Activated CD4-positive, alpha-beta T cell treated with anti-CD3 and anti-CD28 coated beads for 36 hours (primary cell): ENCODE measurements at regions of chr10 and their contacts with region 1.

Region 1: DNA sequence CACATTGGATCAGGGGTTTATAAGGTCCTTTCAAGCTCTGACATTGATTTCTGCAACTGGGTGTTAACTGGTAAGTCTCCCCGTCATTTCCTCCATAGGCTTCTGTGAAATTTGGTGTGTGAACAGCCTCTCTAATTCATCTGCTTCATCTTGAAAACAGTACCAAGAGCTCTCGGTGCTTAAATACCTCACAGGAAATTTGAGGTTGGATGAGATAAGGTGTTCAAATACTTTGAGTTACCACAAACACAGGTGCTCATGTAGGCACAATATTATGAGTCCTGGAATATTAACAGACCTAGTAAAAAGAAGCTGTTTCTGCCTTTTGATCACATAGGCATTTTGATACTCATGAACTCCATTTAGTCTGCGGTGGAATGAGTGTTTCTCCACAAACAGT is 85.2 kb downstream of the RTKN2 start:
- DNase-seq: peak; percentile 53
- ATAC-seq: peak; percentile 54
- H3K4me3 Mint-ChIP-seq: peak overlapping the region; percentile 44
- H3K27ac Mint-ChIP-seq: peak overlapping the region; percentile 99
- H3K4me1 Mint-ChIP-seq: peaks cover 89% of the 10 kb centered on the region
- H3K27me3 Mint-ChIP-seq: no peaks in the 10 kb centered on the region

Region 2: GRCh38 chr10:60282771-60283353 is 1900.6 kb before region 1 on chr10:
- CTCF ChIA-PET with region 1: no interaction called
- POLR2A ChIA-PET with region 1: no interaction called
- intact Hi-C with region 1: no loop called
- DNase-seq: no peak
- ATAC-seq: no peak
- H3K4me3 Mint-ChIP-seq: no peak overlapping the region
- H3K27ac Mint-ChIP-seq: no peak overlapping the region
- H3K4me1 Mint-ChIP-seq: peaks cover 7% of the 10 kb centered on the region
- H3K27me3 Mint-ChIP-seq: no peaks in the 10 kb centered on the region

Region 3: DNA sequence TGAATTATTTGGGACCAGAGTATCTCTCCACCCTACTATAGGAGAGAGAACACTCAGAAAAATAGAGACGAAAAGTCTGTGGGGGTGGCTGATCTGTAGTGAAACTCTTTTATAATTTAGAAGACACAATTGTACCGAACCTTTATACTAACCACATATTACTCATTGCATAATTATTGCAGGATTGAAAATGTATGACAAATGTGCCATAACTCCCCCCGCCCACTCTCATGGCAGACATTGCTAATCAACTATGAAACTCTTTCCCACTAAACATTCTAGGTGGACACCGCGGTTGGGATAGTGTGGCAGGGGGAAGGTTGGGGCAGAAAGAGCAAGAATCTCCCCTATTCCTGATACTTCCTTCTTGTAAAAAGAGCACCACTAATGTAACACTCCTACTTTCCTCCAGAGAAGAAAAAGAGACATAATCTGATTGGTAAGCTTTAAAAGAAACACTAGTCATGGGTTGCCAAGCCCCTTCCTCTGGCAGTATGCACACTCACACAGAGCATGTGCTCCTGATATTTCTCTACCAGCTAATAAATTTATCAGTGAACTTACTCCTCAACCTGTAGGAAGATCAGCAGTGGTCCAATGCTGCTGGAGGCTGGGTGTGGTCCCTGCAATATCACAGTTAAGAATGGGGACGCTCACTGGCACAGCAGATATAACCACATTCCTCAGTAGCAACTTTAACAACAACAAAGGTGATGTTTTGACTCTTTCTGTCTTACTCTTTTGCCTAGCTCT is 300.6 kb before region 1 on chr10:
- CTCF ChIA-PET with region 1: no interaction called
- POLR2A ChIA-PET with region 1: no interaction called
- intact Hi-C with region 1: loop called (anchors 1 to 5 kb)
- DNase-seq: peak; percentile 86
- ATAC-seq: peak; percentile 96
- H3K4me3 Mint-ChIP-seq: no peak overlapping the region
- H3K27ac Mint-ChIP-seq: peak overlapping the region; percentile 87
- H3K4me1 Mint-ChIP-seq: peaks cover 31% of the 10 kb centered on the region
- H3K27me3 Mint-ChIP-seq: no peaks in the 10 kb centered on the region

Region 4: DNA sequence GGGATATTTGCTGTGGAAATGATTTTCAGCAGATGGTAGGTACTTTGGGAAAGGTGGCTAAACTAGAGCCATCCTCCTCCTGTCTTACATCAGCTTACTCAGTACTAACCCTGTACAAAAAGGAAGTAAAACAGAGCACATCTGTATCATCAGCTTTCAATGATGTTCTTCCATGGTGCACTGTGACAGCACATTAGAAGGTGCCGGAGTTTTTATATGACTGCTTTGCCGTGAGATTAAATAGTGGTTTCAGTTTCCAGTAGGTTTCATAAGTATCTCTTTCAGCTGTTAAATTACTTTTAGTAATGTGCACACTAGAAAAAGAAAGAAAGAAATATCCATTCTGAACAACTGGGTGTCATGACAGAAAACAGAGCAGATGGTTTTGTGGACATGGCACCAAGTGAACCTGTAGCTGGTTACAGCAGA is 195.5 kb before region 1 on chr10:
- CTCF ChIA-PET with region 1: interaction called, 7 read pairs
- POLR2A ChIA-PET with region 1: interaction called, 13 read pairs
- intact Hi-C with region 1: loop called (anchors 1 to 2 kb)
- DNase-seq: peak; percentile 40
- ATAC-seq: peak; percentile 89
- H3K4me3 Mint-ChIP-seq: peak overlapping the region; percentile 29
- H3K27ac Mint-ChIP-seq: peak overlapping the region; percentile 99
- H3K4me1 Mint-ChIP-seq: peaks cover 92% of the 10 kb centered on the region
- H3K27me3 Mint-ChIP-seq: no peaks in the 10 kb centered on the region

Region 5: DNA sequence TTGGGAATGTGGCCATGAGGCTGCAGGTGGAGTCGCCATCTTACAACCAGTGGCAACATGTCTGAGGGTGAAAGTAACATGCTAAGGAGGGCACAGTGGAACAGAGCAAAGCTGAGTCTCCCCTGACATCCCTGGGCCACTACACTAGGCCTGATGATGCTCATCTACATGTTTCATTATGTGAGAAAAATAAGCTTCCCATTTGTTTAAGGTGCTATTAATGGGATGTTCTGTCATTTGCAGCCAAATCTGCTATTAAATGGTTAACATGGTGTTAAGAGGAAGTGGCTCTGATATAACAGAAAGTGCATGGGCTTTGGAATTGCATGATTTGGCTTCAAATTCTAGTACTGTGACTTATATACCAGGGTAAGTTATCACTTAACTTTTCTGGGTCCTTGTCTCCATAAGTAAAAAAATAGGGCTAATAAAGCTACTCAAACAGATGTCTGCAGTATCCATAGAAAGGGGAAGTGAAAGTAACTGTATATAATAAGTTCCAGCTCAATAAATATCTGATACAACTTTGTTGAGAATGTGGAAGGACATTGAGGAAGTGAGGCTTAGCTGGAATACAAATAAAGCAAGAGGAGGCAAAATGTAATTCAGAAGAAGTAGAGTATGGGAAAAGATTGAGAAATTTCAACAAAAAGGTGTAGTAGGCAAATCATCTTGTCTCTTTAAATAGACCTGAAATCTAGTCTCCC is 73.7 kb before region 1 on chr10:
- CTCF ChIA-PET with region 1: no interaction called
- POLR2A ChIA-PET with region 1: no interaction called
- intact Hi-C with region 1: loop called in 1 of 2 experiments (anchors 5 kb)
- DNase-seq: no peak
- ATAC-seq: no peak
- H3K4me3 Mint-ChIP-seq: no peak overlapping the region
- H3K27ac Mint-ChIP-seq: no peak overlapping the region
- H3K4me1 Mint-ChIP-seq: peaks cover 52% of the 10 kb centered on the region
- H3K27me3 Mint-ChIP-seq: no peaks in the 10 kb centered on the region

Region 6: DNA sequence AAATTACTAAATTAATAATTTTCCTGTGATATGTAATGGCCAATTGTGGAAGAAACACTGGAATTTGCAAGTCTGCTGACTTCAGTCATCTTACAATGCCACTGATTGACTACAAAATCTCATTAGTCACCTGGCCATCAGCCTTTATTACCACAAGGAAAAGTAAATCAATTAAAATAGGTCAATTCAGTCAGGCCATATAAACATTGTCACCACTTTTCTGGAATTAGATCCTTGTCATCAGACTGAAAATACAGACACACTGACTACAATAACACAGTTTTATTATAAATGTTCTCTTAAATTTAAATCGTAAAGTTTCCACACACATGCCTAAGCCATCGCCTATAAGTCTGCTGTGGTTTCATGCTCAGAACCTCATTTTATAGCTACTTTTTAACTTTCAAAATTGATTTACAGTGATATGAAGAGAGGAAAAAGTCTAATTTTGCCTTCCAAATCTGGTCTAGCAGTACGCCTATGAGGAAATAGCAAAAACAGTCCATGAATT is 31.0 kb after region 1 on chr10:
- CTCF ChIA-PET with region 1: no interaction called
- POLR2A ChIA-PET with region 1: no interaction called
- intact Hi-C with region 1: no loop called
- DNase-seq: no peak
- ATAC-seq: no peak
- H3K4me3 Mint-ChIP-seq: no peak overlapping the region
- H3K27ac Mint-ChIP-seq: no peak overlapping the region
- H3K4me1 Mint-ChIP-seq: peaks cover 6% of the 10 kb centered on the region
- H3K27me3 Mint-ChIP-seq: no peaks in the 10 kb centered on the region

Region 7: GRCh38 chr10:62244780-62245467 is 61.5 kb after region 1 on chr10:
- CTCF ChIA-PET with region 1: interaction called, 10 read pairs
- POLR2A ChIA-PET with region 1: interaction called, 4 read pairs
- intact Hi-C with region 1: loop called (anchors 1 kb)
- DNase-seq: peak; percentile 65
- ATAC-seq: peak; percentile 84
- H3K4me3 Mint-ChIP-seq: peak overlapping the region; percentile 36
- H3K27ac Mint-ChIP-seq: peak overlapping the region; percentile 87
- H3K4me1 Mint-ChIP-seq: peaks cover 35% of the 10 kb centered on the region
- H3K27me3 Mint-ChIP-seq: no peaks in the 10 kb centered on the region

Region 8: GRCh38 chr10:62614389-62615157 is 431.1 kb after region 1 on chr10:
- CTCF ChIA-PET with region 1: no interaction called
- POLR2A ChIA-PET with region 1: no interaction called
- intact Hi-C with region 1: no loop called
- DNase-seq: peak; percentile 58
- ATAC-seq: peak; percentile 85
- H3K4me3 Mint-ChIP-seq: no peak overlapping the region
- H3K27ac Mint-ChIP-seq: peak overlapping the region; percentile 6
- H3K4me1 Mint-ChIP-seq: peaks cover 29% of the 10 kb centered on the region
- H3K27me3 Mint-ChIP-seq: peaks cover 13% of the 10 kb centered on the region

Region 9: DNA sequence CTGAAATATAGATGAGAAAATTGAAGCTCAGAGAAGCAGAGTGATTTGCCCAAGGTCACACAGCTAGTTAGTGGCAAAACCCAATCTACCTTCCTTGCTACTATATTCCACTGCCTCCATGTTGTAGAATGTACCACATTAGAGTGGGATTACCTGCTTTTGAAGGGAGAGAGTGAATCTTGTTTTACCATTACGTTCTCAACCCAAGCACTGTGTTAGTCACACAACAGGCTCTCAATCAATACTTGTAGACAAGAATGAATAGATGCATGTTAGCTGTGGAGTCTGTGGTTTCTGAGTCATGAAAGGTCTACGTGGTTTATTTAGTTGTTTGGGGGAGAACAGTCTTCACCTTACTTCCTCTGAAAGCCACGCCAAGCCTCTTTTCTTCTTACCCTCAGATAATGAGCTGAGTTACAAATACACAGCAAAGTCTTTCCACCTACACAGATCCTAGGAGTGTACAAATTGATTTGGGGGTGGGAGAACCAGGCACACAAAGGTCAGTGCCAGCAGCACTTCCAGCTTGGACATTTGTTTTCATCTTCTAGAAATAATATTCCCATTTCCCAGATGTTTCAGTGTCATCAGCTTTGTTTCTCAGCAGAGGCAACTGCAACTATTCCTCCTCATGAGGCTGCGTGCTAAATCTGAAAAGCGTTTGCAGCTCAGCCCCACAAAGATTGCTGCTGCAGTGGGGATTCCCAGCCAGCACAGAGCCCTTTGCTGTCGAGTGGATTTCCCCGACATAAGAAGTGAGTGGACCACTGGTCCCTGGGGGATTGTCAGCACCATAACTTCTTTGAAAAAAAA is 549.6 kb after region 1 on chr10:
- CTCF ChIA-PET with region 1: no interaction called
- POLR2A ChIA-PET with region 1: no interaction called
- intact Hi-C with region 1: loop called in 1 of 2 experiments (anchors 2 kb)
- DNase-seq: peak; percentile 79
- ATAC-seq: peak; percentile 87
- H3K4me3 Mint-ChIP-seq: peak overlapping the region; percentile 3
- H3K27ac Mint-ChIP-seq: no peak overlapping the region
- H3K4me1 Mint-ChIP-seq: peaks cover 25% of the 10 kb centered on the region
- H3K27me3 Mint-ChIP-seq: peaks cover 5% of the 10 kb centered on the region